GM12878 (cell line): ENCODE measurements at regions of chr5 and their contacts with region 1.

Region 1: DNA sequence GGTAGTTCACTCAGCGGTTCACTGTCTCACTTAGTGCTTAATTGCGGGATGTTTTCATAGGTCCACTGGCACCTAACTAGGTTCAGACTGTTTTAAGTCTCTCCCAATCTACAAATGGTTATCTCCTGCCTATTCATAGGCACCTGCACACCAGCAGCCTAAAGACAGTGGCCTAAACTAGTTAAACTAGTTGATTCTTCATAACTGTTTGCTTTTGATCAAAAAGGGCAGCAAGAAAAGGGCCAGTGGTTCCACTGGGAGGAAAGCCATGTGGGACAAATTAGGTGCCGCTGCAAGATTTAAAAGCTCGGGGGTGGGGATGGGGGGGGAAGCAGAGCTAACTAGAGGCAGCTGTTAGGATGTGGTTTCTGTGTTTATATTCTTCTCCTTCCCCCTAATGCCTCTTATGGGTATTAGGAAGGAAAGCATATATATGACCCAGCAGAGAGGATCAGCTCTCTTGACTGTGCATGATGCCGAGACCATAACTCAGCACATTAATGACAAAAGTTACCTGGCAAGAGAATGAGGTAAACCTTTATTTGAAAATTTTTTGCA is 65.8 kb downstream of the EFNA5 start:
- DNase-seq: no peak
- ATAC-seq: 0 out of 3 replicates have a peak, but pooled peaks have one; percentile 21
- H3K4me3 ChIP-seq: no peak overlapping the region
- H3K27ac ChIP-seq: no peak overlapping the region
- H3K4me1 ChIP-seq: no peaks in the 10 kb centered on the region; the same call in 1 of the 2 replicates
- H3K27me3 ChIP-seq: no peaks in the 10 kb centered on the region
- CTCF ChIP-seq: no peak
- EP300 ChIP-seq: no peak
- POLR2A ChIP-seq: no peak
- RAD21 ChIP-seq: no peak

Region 2: DNA sequence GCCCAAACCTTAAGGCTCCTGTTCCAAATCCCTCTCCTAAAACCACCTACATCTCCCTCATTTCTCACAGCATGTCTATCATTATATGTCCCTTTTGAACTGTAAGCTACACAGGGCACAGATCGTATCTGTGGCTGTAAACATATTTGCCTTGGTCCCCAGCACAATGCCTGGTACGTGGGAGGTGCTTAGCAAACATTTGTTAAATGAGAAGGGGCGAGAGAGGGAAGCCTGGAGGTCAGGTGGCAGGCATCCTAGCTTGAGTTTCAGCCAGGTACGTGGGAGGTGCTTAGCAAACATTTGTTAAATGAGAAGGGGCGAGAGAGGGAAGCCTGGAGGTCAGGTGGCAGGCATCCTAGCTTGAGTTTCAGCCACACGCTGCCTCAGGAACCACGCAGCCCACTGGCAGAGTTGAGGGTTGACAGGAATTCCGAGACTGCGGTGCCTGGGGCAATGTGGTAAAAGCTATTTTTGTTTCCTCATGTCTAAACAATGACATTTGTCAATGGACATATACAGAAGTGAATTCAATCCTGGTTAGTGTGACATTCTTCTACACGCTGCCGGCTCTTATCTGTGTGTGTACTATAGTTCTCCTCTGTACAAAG is 47.8 kb before region 1 on chr5:
- CTCF ChIA-PET with region 1: no interaction called
- POLR2A ChIA-PET with region 1: no interaction called
- RAD21 ChIA-PET with region 1: no interaction called
- SMC1A ChIA-PET with region 1: no interaction called
- in situ Hi-C with region 1: no loop called
- intact Hi-C with region 1: no loop called
- DNase-seq: no peak
- ATAC-seq: no peak
- H3K4me3 ChIP-seq: no peak overlapping the region
- H3K27ac ChIP-seq: no peak overlapping the region
- H3K4me1 ChIP-seq: peaks cover 4% of the 10 kb centered on the region; the same call in 1 of the 2 replicates
- H3K27me3 ChIP-seq: no peaks in the 10 kb centered on the region; a peak in 1 of 4 replicates
- CTCF ChIP-seq: no peak
- EP300 ChIP-seq: no peak
- POLR2A ChIP-seq: no peak
- RAD21 ChIP-seq: no peak

Region 3: GRCh38 chr5:107594253-107595045 is 10.5 kb before region 1 on chr5:
- CTCF ChIA-PET with region 1: interaction called, 11 read pairs
- POLR2A ChIA-PET with region 1: interaction called, 4 read pairs
- RAD21 ChIA-PET with region 1: interaction called, 3 read pairs
- SMC1A ChIA-PET with region 1: interaction called, 10 read pairs
- in situ Hi-C with region 1: no loop called
- intact Hi-C with region 1: no loop called
- DNase-seq: no peak
- ATAC-seq: no peak
- H3K4me3 ChIP-seq: no peak overlapping the region
- H3K27ac ChIP-seq: no peak overlapping the region
- H3K4me1 ChIP-seq: no peaks in the 10 kb centered on the region
- H3K27me3 ChIP-seq: no peaks in the 10 kb centered on the region
- CTCF ChIP-seq: no peak
- EP300 ChIP-seq: no peak
- POLR2A ChIP-seq: no peak
- RAD21 ChIP-seq: no peak

Region 4: DNA sequence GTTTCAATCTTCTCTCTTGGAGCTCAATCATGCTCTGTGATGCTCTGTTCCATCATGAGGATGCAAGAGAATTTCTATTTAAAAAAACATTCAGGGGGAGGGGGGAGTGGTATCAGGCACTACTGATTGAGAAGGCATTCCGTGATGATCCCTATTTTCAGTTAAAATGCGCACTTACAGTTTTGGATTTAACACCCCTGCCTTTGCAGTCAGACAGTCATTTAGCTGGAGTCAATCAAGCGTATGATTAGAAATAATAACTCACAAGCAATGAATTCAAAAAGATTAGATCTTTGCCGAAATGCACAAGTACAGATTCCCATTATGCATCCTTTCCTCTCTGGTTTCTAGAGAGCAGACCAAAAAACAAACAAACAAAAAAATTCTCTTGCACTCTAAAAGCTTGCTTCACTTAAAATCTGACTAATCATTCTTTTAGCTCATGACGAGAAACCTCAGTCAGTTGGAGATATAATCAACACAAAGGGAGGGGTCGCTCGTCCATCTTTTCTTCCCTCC is 10.4 kb after region 1 on chr5:
- CTCF ChIA-PET with region 1: interaction called, 5 read pairs
- POLR2A ChIA-PET with region 1: interaction called, 3 read pairs
- RAD21 ChIA-PET with region 1: interaction called, 5 read pairs
- SMC1A ChIA-PET with region 1: interaction called, 15 read pairs
- in situ Hi-C with region 1: no loop called
- intact Hi-C with region 1: no loop called
- DNase-seq: no peak
- ATAC-seq: no peak
- H3K4me3 ChIP-seq: no peak overlapping the region
- H3K27ac ChIP-seq: no peak overlapping the region
- H3K4me1 ChIP-seq: no peaks in the 10 kb centered on the region
- H3K27me3 ChIP-seq: no peaks in the 10 kb centered on the region
- CTCF ChIP-seq: no peak
- EP300 ChIP-seq: no peak
- POLR2A ChIP-seq: no peak
- RAD21 ChIP-seq: no peak

Region 5: GRCh38 chr5:107661038-107661649 is 56.2 kb after region 1 on chr5:
- CTCF ChIA-PET with region 1: no interaction called
- POLR2A ChIA-PET with region 1: no interaction called
- RAD21 ChIA-PET with region 1: interaction called, 6 read pairs
- SMC1A ChIA-PET with region 1: interaction called, 25 read pairs
- in situ Hi-C with region 1: no loop called
- intact Hi-C with region 1: no loop called
- DNase-seq: peak; percentile 60
- ATAC-seq: peak; percentile 66
- H3K4me3 ChIP-seq: no peak overlapping the region
- H3K27ac ChIP-seq: no peak overlapping the region
- H3K4me1 ChIP-seq: no peaks in the 10 kb centered on the region; the same call in 1 of the 2 replicates
- H3K27me3 ChIP-seq: no peaks in the 10 kb centered on the region; a peak in 1 of 4 replicates
- CTCF ChIP-seq: no peak
- EP300 ChIP-seq: no peak
- POLR2A ChIP-seq: no peak
- RAD21 ChIP-seq: no peak

Region 6: GRCh38 chr5:107948373-107948772 is 343.5 kb after region 1 on chr5:
- CTCF ChIA-PET with region 1: no interaction called
- POLR2A ChIA-PET with region 1: no interaction called
- RAD21 ChIA-PET with region 1: no interaction called
- SMC1A ChIA-PET with region 1: no interaction called
- in situ Hi-C with region 1: no loop called
- intact Hi-C with region 1: no loop called
- DNase-seq: no peak
- ATAC-seq: no peak
- H3K4me3 ChIP-seq: no peak overlapping the region
- H3K27ac ChIP-seq: no peak overlapping the region
- H3K4me1 ChIP-seq: no peaks in the 10 kb centered on the region
- H3K27me3 ChIP-seq: no peaks in the 10 kb centered on the region
- CTCF ChIP-seq: no peak
- EP300 ChIP-seq: no peak
- POLR2A ChIP-seq: no peak
- RAD21 ChIP-seq: no peak

Region 7: GRCh38 chr5:108149369-108149768 is 544.5 kb after region 1 on chr5:
- CTCF ChIA-PET with region 1: no interaction called
- POLR2A ChIA-PET with region 1: no interaction called
- RAD21 ChIA-PET with region 1: no interaction called
- SMC1A ChIA-PET with region 1: no interaction called
- in situ Hi-C with region 1: no loop called
- intact Hi-C with region 1: no loop called
- DNase-seq: no peak
- ATAC-seq: no peak
- H3K4me3 ChIP-seq: no peak overlapping the region
- H3K27ac ChIP-seq: no peak overlapping the region
- H3K4me1 ChIP-seq: no peaks in the 10 kb centered on the region
- H3K27me3 ChIP-seq: no peaks in the 10 kb centered on the region
- CTCF ChIP-seq: no peak
- EP300 ChIP-seq: no peak
- POLR2A ChIP-seq: no peak
- RAD21 ChIP-seq: no peak